ENCODE measurements at regions of chr4 and their contacts with region 1.

Region 1: GRCh38 chr4:88613417-88613875 is 21.2 kb downstream of the HERC3 start:
- DNase-seq: no peak
- ATAC-seq: no peak
- H3K4me3 ChIP-seq: no peak overlapping the region
- H3K27ac ChIP-seq: peak overlapping the region; percentile 67 to 80
- H3K4me1 ChIP-seq: peaks cover 9 to 13% of the 10 kb centered on the region in 2 donors
- H3K27me3 ChIP-seq: no peaks in the 10 kb centered on the region

Region 2: DNA sequence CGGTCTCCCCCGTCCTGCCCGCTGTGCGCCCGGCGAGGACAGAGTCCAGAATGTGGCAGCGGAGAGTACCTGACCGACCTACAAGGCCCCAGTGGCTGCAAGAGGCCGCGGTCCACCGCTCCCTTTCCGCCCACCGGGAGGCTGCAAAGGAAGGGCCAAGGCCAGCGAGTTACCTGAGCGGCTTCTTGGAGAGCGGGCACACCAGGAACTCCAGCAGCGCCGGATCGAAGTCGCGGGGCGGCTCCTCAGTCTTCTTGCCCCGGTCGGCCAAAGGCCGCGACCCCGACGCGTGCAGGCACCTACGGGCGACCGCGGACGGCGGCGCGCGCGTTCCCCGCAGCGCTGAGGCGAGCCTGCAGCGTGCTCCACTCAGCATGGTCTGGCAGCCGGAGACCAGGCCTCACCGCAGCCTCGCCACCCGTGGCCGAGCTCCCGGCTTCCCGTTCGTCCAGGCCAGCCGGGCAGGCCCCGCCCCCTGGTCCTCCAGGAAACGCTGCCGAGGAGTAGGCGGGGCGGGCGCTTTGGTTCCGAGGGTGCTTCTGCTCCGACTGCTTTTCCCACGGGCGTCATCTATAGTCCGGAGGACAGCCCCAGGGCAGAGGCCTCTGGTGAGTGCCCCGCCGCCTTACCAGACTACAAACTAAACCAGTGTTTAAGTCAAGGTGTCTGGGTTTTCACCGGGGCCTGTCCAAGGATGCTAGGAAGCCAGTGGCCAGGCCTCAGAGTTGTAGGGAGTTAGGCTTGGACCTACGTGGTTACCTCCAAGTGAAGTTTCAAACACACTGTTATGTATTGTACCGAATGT is 89.9 kb before region 1 on chr4 and contains the start of gene PYURF:
- intact Hi-C with region 1: loop called in 1 of 2 experiments (anchors 5 kb)
- DNase-seq: peak; percentile 98
- ATAC-seq: peak; percentile 98
- H3K4me3 ChIP-seq: peak within 1 kb of the TSS; percentile 74 to 84
- H3K27ac ChIP-seq: peak within 1 kb of the TSS; percentile 65 to 89
- H3K4me1 ChIP-seq: no peaks in the 10 kb centered on the region
- H3K27me3 ChIP-seq: no peaks in the 10 kb centered on the region
- total RNA-seq, gene PYURF: 51.9 TPM

Region 3: DNA sequence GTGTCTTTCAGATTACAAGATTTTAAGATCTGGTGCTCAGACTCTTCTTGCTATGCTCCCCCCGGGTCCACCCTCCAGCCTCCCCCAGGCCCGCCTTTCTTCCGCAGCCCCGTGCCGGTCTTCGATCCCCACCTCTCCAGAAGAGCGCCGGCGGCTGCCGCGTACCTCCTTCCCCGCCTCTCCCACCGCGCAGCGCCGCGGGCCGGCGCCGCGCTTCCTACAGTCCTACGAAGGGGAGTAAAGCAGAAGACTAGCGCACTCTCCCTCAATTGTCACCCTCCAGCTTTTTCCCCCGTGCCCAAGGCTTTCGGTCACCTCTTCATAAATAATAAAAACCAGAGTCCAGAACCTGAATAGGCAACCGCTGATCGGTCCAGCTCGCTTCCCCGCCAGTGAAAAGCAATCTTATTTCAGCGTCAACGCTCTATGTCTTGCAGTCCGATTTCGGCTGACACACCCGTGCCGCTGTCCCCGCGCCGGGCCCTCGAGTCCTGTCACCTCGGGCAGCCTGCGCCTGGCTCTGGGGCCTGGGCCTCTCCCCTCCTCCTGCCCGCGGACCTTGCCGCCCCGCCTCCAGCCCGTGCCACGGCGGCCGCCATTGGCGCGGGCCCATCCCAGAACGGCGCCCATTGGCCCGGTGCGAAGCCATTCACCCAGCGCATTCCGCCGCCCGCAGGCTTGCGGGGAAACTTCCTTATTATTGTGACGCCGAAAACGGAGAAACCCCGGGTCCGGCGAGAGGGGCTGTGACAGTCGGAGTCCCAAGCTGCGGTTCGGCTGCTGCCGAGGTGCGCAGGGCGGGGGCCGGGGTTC is 21.5 kb before region 1 on chr4 and contains the start of gene HERC3:
- intact Hi-C with region 1: loop called in 1 of 2 experiments (anchors 2 kb)
- DNase-seq: peak; percentile 95 to 97
- ATAC-seq: peak; percentile 100
- H3K4me3 ChIP-seq: peak within 1 kb of the TSS; percentile 60 to 86
- H3K27ac ChIP-seq: peak within 1 kb of the TSS; percentile 87 to 91
- H3K4me1 ChIP-seq: no peaks in the 10 kb centered on the region
- H3K27me3 ChIP-seq: no peaks in the 10 kb centered on the region
- total RNA-seq, gene HERC3: 34.4 to 46.2 TPM

Region 4: GRCh38 chr4:88659055-88659889 is 45.8 kb after region 1 on chr4:
- intact Hi-C with region 1: loop called in 1 of 2 experiments (anchors 5 kb)
- DNase-seq: peak in 1 of 2 donors; percentile 49
- ATAC-seq: peak; percentile 87
- H3K4me3 ChIP-seq: no peak overlapping the region
- H3K27ac ChIP-seq: peak overlapping the region in 1 of 2 donors; percentile 68
- H3K4me1 ChIP-seq: peaks cover 0 to 3% of the 10 kb centered on the region in 2 donors
- H3K27me3 ChIP-seq: no peaks in the 10 kb centered on the region

Measured in aorta (tissue), 5 donors.